Heart right ventricle (tissue), 16 donors: ENCODE measurements at regions of chr9 and their contacts with region 1.

Region 1: GRCh38 chr9:130860458-130861316 is 25.6 kb downstream of the ABL1 start:
- DNase-seq: peak; percentile 79 to 88
- ATAC-seq: peak; percentile 89 to 95 (median 94)
- H3K4me3 ChIP-seq: peak overlapping the region in 5 of 10 donors; percentile 0 to 14 (median 6)
- H3K27ac ChIP-seq: peak overlapping the region in 9 of 10 donors; percentile 50 to 86 (median 75)
- H3K4me1 ChIP-seq: peaks cover 13 to 69% (median 45%) of the 10 kb centered on the region in 9 donors
- H3K27me3 ChIP-seq: no peaks in the 10 kb centered on the region
- CTCF ChIP-seq: peak in 8 of 9 donors; percentile 36 to 81 (median 58)

Region 2: GRCh38 chr9:130707225-130707976 is 153.3 kb before region 1 on chr9:
- intact Hi-C with region 1: loop called (anchors 1 to 5 kb)
- DNase-seq: peak in 1 of 2 donors; percentile 74
- ATAC-seq: peak in 4 of 8 donors; percentile 18 to 41 (median 28)
- H3K4me3 ChIP-seq: no peak overlapping the region
- H3K27ac ChIP-seq: no peak overlapping the region
- H3K4me1 ChIP-seq: peaks cover 0 to 8% (median 4%) of the 10 kb centered on the region in 9 donors
- H3K27me3 ChIP-seq: no peaks in the 10 kb centered on the region
- CTCF ChIP-seq: peak; percentile 66 to 90 (median 79)

Region 3: GRCh38 chr9:130834371-130835311 is 26.0 kb before region 1 on chr9 and contains the start of gene ABL1:
- intact Hi-C with region 1: loop called in 1 of 10 experiments (anchors 2 kb)
- DNase-seq: peak; percentile 78 to 84
- ATAC-seq: peak; percentile 73 to 92 (median 86)
- H3K4me3 ChIP-seq: peak within 1 kb of the TSS; percentile 36 to 78 (median 68)
- H3K27ac ChIP-seq: peak within 1 kb of the TSS; percentile 92 to 96 (median 94)
- H3K4me1 ChIP-seq: peaks cover 10 to 75% (median 66%) of the 10 kb centered on the region in 9 donors
- H3K27me3 ChIP-seq: no peaks in the 10 kb centered on the region
- CTCF ChIP-seq: no peak
- total RNA-seq, gene ABL1: 27.1 to 48.8 (median 34.0) TPM

Region 4: DNA sequence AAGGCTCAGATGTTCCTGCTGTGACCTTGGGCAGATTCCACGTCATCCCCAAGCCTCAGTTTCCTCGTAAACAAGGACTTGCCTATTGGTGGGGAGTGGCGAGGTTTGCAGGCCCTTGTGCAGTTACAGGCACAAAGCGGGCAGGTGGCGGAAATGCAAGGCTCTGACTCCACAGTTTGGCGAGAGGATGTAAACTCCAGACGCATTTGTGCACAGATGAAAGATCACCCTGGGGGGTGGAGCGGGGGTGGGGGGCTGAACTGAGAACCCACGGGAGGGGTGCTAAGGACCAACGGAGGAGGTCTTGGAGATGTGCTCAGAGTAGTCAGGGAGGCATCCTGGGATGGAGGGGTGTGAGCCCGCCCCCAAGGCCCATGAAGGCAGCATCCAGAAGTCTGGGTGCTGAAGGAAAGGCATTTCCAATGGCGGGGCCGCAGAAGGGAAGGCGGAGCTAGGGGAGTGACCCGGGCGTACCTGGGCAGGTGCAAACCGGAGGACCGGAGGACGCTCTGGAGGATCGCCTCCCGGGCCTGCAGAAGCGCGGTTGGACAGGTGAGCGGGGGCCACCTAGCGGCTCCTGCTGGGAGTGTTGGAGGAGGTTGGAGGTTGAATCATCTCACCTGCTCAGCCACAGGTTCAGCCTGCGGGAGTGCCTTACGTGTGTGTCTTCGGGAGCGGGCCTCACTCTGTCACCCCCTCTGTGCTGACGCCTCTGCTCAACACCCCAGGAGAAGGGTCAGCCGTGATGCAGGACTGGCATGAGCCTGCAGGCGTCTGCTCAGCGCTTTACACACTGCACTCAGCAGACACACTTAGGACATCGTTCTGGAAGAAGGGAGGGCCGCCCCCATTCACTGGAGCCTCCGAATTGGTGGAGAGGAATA is 80.2 kb after region 1 on chr9:
- intact Hi-C with region 1: no loop called
- DNase-seq: peak; percentile 45 to 73
- ATAC-seq: peak; percentile 52 to 84 (median 73)
- H3K4me3 ChIP-seq: no peak overlapping the region
- H3K27ac ChIP-seq: no peak overlapping the region
- H3K4me1 ChIP-seq: peaks cover 0 to 37% (median 21%) of the 10 kb centered on the region in 9 donors
- H3K27me3 ChIP-seq: peaks cover 33 to 75% (median 72%) of the 10 kb centered on the region in 7 donors
- CTCF ChIP-seq: peak; percentile 57 to 86 (median 84)